Activated CD4-positive, alpha-beta T cell treated with anti-CD3 and anti-CD28 coated beads for 36 hours (primary cell): ENCODE measurements at regions of chr19 and their contacts with region 1.

Region 1: GRCh38 chr19:48170038-48170812 is at the starts of genes LIG1 and ZSWIM9:
- DNase-seq: peak; percentile 96
- ATAC-seq: peak; percentile 90
- H3K4me3 Mint-ChIP-seq: peak within 1 kb of the TSS; percentile 79
- H3K27ac Mint-ChIP-seq: peak within 1 kb of the TSS; percentile 95
- H3K4me1 Mint-ChIP-seq: peaks cover 30% of the 10 kb centered on the region
- H3K27me3 Mint-ChIP-seq: no peaks in the 10 kb centered on the region
- total RNA-seq, gene LIG1: 193 to 194 TPM
- total RNA-seq, gene ZSWIM9: 7.4 to 10.9 TPM

Region 2: GRCh38 chr19:47693493-47693892 is 476.7 kb before region 1 on chr19:
- CTCF ChIA-PET with region 1: no interaction called
- POLR2A ChIA-PET with region 1: no interaction called
- intact Hi-C with region 1: no loop called
- DNase-seq: no peak
- ATAC-seq: no peak
- H3K4me3 Mint-ChIP-seq: no peak overlapping the region
- H3K27ac Mint-ChIP-seq: no peak overlapping the region
- H3K4me1 Mint-ChIP-seq: no peaks in the 10 kb centered on the region
- H3K27me3 Mint-ChIP-seq: no peaks in the 10 kb centered on the region

Region 3: GRCh38 chr19:48152551-48152950 is 17.7 kb before region 1 on chr19:
- CTCF ChIA-PET with region 1: interaction called, 3 read pairs
- POLR2A ChIA-PET with region 1: interaction called, 10 read pairs
- intact Hi-C with region 1: no loop called
- DNase-seq: peak; percentile 80
- ATAC-seq: peak; percentile 53
- H3K4me3 Mint-ChIP-seq: no peak overlapping the region
- H3K27ac Mint-ChIP-seq: no peak overlapping the region
- H3K4me1 Mint-ChIP-seq: no peaks in the 10 kb centered on the region
- H3K27me3 Mint-ChIP-seq: no peaks in the 10 kb centered on the region

Region 4: DNA sequence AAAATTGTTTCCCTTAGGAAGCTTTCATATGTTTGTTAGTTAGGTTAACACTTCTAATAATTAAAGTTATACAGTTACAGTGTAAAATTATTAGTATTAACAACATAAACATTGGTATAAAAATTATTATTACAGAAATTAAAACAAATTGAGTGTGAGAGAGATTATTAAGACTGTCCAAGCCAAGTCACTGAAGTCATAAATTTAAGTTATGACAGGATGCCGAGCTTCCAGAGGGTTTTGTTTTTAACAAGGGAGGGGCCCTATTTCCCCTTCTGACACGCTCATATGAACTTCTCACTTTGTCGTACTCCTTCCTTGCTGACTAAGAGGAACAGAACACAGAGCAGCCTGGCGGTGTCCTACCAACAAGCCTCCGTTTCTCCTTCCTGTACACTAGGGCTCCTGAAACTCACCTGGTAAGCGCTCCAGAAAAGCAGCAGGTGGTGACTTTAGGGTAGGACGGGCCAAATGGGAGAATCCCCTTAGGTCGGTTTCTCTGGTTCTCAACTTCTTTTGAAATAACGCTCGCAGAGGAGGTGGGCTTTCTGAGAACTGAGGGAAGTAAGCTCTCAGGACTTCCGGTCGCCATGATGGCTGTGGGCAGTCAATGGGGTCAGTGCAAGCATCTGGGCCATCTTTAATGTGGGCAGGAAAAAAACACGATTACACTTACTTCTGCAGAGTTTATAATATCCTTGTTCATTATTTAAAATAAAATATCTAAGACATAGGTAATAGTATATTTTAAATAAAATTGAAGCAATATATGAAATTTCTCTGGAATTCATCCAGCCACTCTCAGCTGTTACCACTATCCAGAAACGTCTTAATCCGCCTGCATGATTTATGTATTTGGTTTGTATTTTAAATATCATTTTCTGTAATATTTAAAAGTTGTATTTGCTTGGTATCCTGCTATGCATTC is 85.4 kb after region 1 on chr19 and contains the start of gene CARD8:
- CTCF ChIA-PET with region 1: interaction called, 3 read pairs
- POLR2A ChIA-PET with region 1: no interaction called
- intact Hi-C with region 1: loop called (anchors 1 kb)
- DNase-seq: peak; percentile 89
- ATAC-seq: peak; percentile 89
- H3K4me3 Mint-ChIP-seq: peak within 1 kb of the TSS; percentile 92
- H3K27ac Mint-ChIP-seq: peak within 1 kb of the TSS; percentile 98
- H3K4me1 Mint-ChIP-seq: peaks cover 63% of the 10 kb centered on the region
- H3K27me3 Mint-ChIP-seq: no peaks in the 10 kb centered on the region
- total RNA-seq, gene CARD8: 109 to 118 TPM

Region 5: DNA sequence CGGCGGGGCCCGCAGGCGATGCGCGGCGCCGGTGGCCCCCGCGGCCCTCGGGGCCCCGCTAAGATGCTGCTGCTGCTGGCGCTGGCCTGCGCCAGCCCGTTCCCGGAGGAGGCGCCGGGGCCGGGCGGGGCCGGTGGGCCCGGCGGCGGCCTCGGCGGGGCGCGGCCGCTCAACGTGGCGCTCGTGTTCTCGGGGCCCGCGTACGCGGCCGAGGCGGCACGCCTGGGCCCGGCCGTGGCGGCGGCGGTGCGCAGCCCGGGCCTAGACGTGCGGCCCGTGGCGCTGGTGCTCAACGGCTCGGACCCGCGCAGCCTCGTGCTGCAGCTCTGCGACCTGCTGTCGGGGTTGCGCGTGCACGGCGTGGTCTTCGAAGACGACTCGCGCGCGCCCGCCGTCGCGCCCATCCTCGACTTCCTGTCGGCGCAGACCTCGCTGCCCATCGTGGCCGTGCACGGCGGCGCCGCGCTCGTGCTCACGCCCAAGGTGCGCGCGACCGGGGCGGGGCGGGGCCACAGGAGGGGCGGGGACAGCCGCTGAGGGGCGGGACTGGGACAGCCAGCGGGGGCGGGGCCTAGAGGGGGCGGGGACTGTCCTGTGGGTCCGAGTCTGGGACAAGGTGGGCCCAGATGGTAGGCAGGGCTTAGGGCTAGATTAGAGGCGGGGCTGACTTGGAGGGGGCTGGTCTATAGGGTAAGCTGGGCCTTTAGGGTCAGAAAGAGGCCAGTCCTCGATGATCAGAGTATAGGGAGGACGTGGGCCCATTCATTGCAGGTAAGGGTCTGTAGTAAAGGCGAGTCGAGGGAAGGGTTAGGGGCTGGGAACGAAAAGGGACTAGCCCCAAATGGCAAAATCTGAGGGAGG is 228.4 kb after region 1 on chr19:
- CTCF ChIA-PET with region 1: no interaction called
- POLR2A ChIA-PET with region 1: no interaction called
- intact Hi-C with region 1: loop called in 1 of 2 experiments (anchors 2 kb)
- DNase-seq: peak; percentile 94
- ATAC-seq: peak; percentile 68
- H3K4me3 Mint-ChIP-seq: peak overlapping the region; percentile 83
- H3K27ac Mint-ChIP-seq: no peak overlapping the region
- H3K4me1 Mint-ChIP-seq: peaks cover 29% of the 10 kb centered on the region
- H3K27me3 Mint-ChIP-seq: peaks cover 31% of the 10 kb centered on the region